Mammary epithelial cell (primary cell): ENCODE measurements at regions of chrX and their contacts with region 1.

Region 1: GRCh38 chrX:47247206-47247998 is 14.6 kb downstream of the USP11 start:
- DNase-seq: peak; percentile 16
- H3K4me3 ChIP-seq: no peak overlapping the region
- H3K27ac ChIP-seq: no peak overlapping the region
- H3K4me1 ChIP-seq: no peaks in the 10 kb centered on the region
- H3K27me3 ChIP-seq: no peaks in the 10 kb centered on the region
- CTCF ChIP-seq: no peak

Region 2: DNA sequence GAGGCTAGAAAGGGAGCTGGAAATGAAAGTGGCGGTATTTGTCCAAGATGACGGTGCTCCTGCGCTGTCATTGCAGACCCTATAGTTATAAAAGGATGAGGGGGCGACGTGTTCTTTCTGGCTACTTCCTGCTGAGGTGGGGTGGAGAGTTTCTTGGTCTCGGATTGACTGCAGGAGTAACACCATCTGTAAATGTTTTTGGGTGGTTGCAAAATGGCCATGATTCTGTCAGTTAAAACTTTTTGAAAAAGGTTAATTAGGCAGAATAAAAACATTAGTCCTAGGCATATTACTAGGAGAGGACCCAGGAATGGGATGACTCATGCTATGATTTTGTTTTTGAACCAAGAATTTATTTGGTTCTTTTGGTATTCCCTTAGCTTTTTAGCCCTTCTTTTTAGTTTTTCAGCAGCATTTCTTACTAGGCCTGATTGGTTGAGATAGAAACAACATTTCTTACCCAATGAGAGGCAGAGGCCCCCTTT is 38.5 kb after region 1 on chrX:
- CTCF ChIA-PET with region 1: no interaction called
- dilution Hi-C with region 1: loop called (anchors 5 kb)
- in situ Hi-C with region 1: no loop called
- intact Hi-C with region 1: no loop called
- DNase-seq: no peak
- H3K4me3 ChIP-seq: no peak overlapping the region
- H3K27ac ChIP-seq: no peak overlapping the region
- H3K4me1 ChIP-seq: no peaks in the 10 kb centered on the region
- H3K27me3 ChIP-seq: no peaks in the 10 kb centered on the region
- CTCF ChIP-seq: no peak